ENCODE measurements at regions of chr6 and their contacts with region 1.

Region 1: GRCh38 chr6:71250099-71250606 is 38.5 kb upstream of the OGFRL1 start:
- DNase-seq: no peak
- H3K4me3 ChIP-seq: no peak overlapping the region
- H3K27ac ChIP-seq: peak overlapping the region in 4 of 5 donors; percentile 39 to 66 (median 55)
- H3K4me1 ChIP-seq: peaks cover 0 to 18% of the 10 kb centered on the region in 2 donors
- H3K27me3 ChIP-seq: no peaks in the 10 kb centered on the region
- CTCF ChIP-seq: no peak
- POLR2A ChIP-seq: no peak

Region 2: DNA sequence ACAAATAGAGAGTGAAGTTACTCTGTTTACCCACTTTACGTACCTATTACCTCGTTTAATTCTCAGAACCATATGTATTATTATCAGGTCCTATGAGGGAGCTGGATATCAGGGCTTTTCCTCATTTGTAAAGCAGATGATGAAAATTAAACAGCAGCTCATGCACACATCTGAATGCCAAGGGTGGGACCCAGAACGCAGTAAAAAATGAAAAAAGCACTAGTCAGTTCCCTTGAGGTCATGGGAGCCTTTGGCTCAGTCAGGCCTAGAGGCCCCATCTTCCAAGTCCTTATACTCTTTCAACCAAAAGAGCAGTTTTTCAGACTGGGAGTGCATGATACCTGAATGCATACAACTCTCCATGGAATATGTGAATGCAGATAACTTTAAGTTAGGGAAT is 316.3 kb before region 1 on chr6:
- intact Hi-C with region 1: no loop called
- DNase-seq: no peak
- H3K4me3 ChIP-seq: no peak overlapping the region
- H3K27ac ChIP-seq: no peak overlapping the region
- H3K4me1 ChIP-seq: no peaks in the 10 kb centered on the region
- H3K27me3 ChIP-seq: no peaks in the 10 kb centered on the region
- CTCF ChIP-seq: no peak
- POLR2A ChIP-seq: no peak

Region 3: DNA sequence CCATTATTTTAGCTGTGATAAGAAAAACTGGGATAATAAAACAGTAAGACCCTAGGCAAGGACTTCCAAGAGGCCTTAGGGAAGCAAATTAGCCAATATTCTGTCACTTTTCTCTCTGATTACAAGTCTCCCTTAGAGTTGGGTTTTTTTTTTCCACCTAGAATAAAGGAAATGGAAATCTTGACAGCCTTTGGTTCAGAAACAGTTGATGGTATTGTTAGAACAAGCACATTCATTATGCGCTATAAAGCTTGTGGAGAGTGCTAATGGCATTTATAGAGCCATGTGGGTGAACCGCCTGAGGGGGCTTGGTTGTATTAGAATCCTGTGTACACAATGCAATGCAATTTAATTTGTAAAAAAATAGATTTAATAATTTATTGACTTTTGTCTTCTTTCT is 50.4 kb before region 1 on chr6:
- intact Hi-C with region 1: loop called in 1 of 2 experiments (anchors 2 kb)
- DNase-seq: no peak
- H3K4me3 ChIP-seq: no peak overlapping the region
- H3K27ac ChIP-seq: no peak overlapping the region
- H3K4me1 ChIP-seq: no peaks in the 10 kb centered on the region
- H3K27me3 ChIP-seq: no peaks in the 10 kb centered on the region
- CTCF ChIP-seq: no peak
- POLR2A ChIP-seq: no peak

Region 4: GRCh38 chr6:71523548-71523947 is 273.4 kb after region 1 on chr6:
- intact Hi-C with region 1: no loop called
- DNase-seq: no peak
- H3K4me3 ChIP-seq: no peak overlapping the region
- H3K27ac ChIP-seq: no peak overlapping the region
- H3K4me1 ChIP-seq: peaks cover 0 to 5% of the 10 kb centered on the region in 2 donors
- H3K27me3 ChIP-seq: no peaks in the 10 kb centered on the region
- CTCF ChIP-seq: no peak
- POLR2A ChIP-seq: no peak

Measured in adrenal gland (tissue), 19 donors.